ENCODE measurements at regions of chr9 and their contacts with region 1.

Region 1: DNA sequence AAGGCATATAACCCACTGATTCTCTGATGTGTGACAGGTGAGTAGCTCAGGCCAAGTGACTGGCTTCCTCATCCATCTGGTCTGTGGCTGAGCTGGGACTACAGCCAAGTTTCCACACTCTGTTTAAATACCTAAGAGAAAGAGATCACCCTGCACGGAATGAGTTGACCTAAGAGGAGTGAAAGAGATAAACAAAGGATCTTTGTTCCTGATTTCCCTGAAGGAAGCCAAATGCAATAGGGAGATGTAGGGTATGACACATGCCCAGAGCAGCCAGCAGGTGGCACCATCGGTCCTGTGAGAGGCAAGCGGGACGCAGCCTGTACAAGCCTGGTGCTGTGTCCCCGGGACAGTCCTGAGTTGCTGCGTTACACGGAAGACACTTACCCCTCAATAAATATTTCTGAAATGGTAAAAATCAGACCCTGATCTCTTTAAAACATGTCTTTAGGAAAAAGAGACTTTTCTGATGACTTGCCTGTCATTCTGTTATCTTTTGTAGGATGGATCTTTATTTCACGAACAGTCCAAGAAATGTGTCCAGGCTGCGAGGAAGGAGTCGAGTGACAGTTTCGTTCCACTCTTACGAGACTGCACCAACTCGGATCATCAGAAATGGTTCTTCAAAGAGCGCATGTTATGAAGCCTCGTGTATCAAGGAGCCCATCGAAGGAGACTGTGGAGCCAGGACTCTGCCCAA is 41.1 kb downstream of the GALNT12 start:
- DNase-seq: peak; percentile 82
- H3K4me3 ChIP-seq: no peak overlapping the region
- H3K27ac ChIP-seq: no peak overlapping the region
- H3K4me1 ChIP-seq: no peaks in the 10 kb centered on the region
- H3K27me3 ChIP-seq: no peaks in the 10 kb centered on the region
- CTCF ChIP-seq: peak; percentile 95

Region 2: DNA sequence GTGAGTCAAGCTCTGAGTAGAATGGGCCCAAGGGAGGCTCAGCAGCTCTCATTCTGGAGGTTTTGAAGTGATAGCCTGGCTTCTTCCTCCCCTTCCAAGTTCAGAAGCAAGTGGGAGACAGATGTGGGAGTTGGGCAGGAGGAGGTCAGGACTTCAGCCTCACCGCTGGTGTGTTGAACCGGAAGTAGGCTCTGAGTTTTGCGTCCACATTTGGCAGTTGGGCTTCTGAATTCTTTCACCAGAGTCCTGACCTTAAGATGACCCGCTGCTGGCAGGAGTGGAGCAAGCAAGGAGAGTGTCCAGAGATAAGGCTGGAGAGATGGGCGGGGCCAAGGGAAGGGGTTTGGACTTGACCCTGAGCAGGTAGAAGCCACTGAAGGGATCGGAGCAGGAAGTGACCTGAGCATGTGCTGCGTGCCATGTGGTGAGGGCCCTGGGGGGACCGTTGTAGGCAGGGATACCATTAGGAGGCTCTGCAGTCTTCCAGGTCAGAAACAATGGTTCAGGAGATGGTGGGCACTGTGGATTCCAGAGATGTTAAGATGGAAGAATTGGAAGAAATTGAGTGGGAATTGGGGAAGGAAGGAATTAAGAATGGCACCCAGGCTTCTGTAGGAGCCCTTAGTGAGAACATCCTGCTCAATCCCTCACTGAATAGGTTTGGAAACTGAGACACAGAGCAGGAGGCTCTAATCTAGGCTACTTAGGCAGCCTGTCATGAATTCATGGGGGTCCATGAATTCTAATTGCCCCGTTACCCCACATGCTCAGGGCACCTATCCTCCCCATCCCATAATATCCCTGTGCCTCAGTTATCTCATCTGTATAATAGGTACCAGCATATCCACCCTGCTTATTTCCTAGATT is 15.3 kb before region 1 on chr9:
- CTCF ChIA-PET with region 1: interaction called, 15 read pairs
- POLR2A ChIA-PET with region 1: no interaction called
- intact Hi-C with region 1: no loop called
- DNase-seq: no peak
- H3K4me3 ChIP-seq: no peak overlapping the region
- H3K27ac ChIP-seq: no peak overlapping the region
- H3K4me1 ChIP-seq: no peaks in the 10 kb centered on the region
- H3K27me3 ChIP-seq: no peaks in the 10 kb centered on the region
- CTCF ChIP-seq: no peak

Region 3: DNA sequence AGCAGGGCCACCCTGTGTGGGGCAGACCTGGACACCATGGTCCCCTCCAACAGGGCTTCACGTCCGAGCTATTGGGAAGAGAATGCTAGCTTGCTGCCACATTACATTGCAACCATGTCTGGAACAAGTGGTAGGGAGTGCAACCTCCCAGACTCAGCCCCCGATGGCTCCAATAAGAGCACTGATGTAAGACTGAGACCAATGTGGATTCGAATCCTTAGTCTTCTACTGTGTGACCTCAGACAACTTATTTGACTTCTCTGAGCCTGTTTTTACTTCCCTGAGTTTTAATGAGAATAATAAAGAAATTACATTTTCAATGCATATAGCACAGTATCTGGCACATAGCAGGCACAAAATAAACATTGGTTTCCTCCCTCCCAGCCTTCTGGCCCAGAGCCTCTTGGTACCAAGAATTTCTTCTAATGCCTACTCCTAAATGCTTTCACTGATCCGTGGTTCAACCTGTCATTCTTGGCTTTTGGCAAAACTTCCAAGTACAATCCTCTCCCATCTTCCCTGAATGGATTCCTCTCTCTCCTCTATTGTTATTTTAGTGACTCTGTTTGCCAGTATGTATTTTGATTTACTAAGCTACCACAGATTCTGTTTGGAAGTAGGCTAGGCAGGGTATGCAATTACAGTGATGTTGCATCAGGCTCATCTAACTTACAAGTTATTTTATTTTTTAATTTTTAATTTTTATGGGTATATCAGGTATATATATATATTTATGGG is 60.5 kb after region 1 on chr9:
- CTCF ChIA-PET with region 1: interaction called, 12 read pairs
- POLR2A ChIA-PET with region 1: no interaction called
- intact Hi-C with region 1: no loop called
- DNase-seq: no peak
- H3K4me3 ChIP-seq: no peak overlapping the region
- H3K27ac ChIP-seq: no peak overlapping the region
- H3K4me1 ChIP-seq: no peaks in the 10 kb centered on the region
- H3K27me3 ChIP-seq: no peaks in the 10 kb centered on the region
- CTCF ChIP-seq: no peak

Region 4: DNA sequence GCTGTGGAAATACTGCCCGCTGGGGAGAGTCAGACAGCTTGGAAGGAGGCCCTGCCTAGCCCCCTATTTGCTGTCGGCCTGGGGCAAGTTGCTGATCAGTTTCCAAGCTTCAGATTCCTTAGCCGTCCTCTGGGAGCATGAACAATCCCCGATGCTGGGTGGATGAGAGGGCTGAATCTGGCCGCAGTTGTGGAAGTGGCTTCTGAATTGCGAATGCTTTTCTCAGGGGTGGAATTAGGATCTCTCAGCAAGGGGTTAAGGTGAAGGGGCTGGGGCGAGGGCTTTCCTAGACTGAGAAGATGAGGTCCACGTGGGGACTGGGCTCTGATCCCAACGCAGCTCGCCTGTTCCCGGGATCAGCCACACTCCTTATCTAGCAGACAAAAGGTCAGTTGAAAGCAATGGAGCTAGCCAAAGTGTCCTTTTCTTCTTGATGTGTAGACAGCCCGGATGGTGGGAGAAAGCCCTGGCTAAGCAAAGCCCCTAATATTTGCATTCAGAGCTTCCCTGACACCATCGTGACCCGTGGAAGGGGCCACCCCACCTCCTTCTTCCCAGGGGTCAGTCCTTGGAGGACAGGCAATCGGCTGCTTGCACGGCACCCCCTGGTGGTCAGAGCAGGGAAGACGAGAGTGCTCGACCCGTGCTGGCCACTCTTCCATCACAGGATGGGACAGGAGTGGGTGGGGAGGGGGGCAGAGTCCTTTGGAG is 150.0 kb after region 1 on chr9:
- CTCF ChIA-PET with region 1: interaction called, 5 read pairs
- POLR2A ChIA-PET with region 1: no interaction called
- intact Hi-C with region 1: loop called (anchors 1 kb)
- DNase-seq: peak; percentile 43
- H3K4me3 ChIP-seq: no peak overlapping the region
- H3K27ac ChIP-seq: no peak overlapping the region
- H3K4me1 ChIP-seq: no peaks in the 10 kb centered on the region
- H3K27me3 ChIP-seq: peaks cover 8% of the 10 kb centered on the region
- CTCF ChIP-seq: peak; percentile 88

Region 5: DNA sequence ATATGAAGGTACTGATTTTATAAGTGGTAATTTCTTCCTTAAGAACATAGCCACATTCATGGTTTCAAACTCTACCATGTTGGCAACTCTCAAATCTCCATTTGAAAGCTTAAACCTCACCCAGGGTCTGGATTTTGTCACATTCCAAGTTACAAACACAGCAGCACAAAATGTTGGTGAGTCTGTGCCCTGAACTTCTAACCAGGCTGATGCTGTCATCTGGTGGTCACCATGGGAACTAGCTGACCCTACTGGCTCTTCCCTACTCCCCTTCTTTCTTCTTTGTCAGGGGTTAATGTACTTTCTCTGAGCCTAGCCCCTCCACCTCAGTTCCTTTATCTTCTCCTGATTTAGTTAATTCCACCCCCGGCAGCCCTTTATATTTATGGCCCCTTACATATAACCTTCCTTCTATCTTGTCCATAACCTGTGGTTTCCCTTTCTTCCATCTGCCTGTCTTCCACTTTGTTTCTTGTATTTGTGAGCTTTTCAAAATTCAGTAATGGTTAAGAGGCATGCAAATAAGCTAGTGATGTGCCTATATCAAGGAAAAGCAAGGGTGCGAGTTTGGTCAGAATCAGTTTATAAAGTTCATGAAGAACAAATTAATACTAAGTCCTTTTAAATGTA is 292.2 kb after region 1 on chr9:
- CTCF ChIA-PET with region 1: interaction called, 11 read pairs
- POLR2A ChIA-PET with region 1: no interaction called
- intact Hi-C with region 1: loop called (anchors 1 kb)
- DNase-seq: peak; percentile 41
- H3K4me3 ChIP-seq: no peak overlapping the region
- H3K27ac ChIP-seq: no peak overlapping the region
- H3K4me1 ChIP-seq: no peaks in the 10 kb centered on the region
- H3K27me3 ChIP-seq: no peaks in the 10 kb centered on the region
- CTCF ChIP-seq: peak; percentile 67

Measured in A673 (cell line).